ENCODE measurements at regions of chr9 and their contacts with region 1.

Region 1: DNA sequence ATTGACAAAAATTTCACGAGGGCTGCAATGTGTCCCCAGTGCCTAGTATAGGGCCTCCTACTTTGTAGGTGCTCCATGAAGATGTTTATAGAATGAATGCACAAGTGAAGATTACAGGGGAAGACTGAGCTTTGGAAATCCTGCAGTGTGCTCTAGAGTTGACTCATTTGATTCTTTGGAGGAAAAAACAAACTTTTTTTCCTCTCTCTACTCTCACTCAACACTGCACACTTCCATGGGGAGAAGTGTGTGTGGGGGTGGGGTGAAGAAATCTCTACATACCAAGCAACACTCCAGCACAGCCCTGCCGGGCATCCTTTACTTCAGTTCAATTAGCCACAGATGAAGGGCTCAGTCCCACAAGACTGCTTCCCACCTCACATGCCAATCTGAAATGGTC is 49.4 kb upstream of the KLF9 start:
- DNase-seq: no peak
- ATAC-seq: no peak
- H3K4me3 ChIP-seq: no peak overlapping the region
- H3K27ac ChIP-seq: no peak overlapping the region
- H3K4me1 ChIP-seq: peaks cover 8 to 21% of the 10 kb centered on the region in 2 donors
- H3K27me3 ChIP-seq: no peaks in the 10 kb centered on the region
- CTCF ChIP-seq: no peak
- POLR2A ChIP-seq: no peak

Region 2: GRCh38 chr9:70444904-70445303 is 19.0 kb before region 1 on chr9:
- in situ Hi-C with region 1: no loop called
- intact Hi-C with region 1: loop called (anchors 1 kb)
- DNase-seq: no peak
- ATAC-seq: no peak
- H3K4me3 ChIP-seq: no peak overlapping the region
- H3K27ac ChIP-seq: no peak overlapping the region
- H3K4me1 ChIP-seq: peaks cover 0 to 6% of the 10 kb centered on the region in 2 donors
- H3K27me3 ChIP-seq: no peaks in the 10 kb centered on the region
- CTCF ChIP-seq: no peak
- POLR2A ChIP-seq: no peak

Measured in gastrocnemius medialis (tissue), 4 donors.